ENCODE measurements at regions of chr11 and their contacts with region 1.

Region 1: DNA sequence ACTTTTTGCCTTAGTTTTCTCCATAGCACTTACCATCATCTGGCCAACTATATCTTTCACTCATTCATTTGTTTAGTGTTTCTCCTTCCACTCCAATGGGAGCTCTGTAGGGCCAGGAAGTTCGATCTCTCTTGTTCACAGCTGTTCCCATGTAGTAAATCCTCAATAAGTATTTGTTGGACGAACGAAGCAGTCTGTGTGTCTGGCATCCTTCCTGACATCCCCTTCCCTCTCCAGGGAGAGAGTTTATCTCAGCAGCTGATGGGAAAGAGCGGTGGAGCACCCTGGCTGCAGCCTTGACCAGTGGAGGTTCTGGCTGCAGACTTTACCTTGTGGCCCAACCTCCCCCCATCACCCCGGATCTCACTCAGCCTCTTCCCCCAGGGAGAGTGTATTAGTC is 141.7 kb downstream of the CHST1 start:
- DNase-seq: no peak
- ATAC-seq: no peak
- H3K4me3 ChIP-seq: no peak overlapping the region
- H3K27ac ChIP-seq: no peak overlapping the region
- H3K4me1 ChIP-seq: no peaks in the 10 kb centered on the region
- H3K27me3 ChIP-seq: peaks cover 0 to 13% (median 0%) of the 10 kb centered on the region in 7 donors
- CTCF ChIP-seq: no peak

Region 2: DNA sequence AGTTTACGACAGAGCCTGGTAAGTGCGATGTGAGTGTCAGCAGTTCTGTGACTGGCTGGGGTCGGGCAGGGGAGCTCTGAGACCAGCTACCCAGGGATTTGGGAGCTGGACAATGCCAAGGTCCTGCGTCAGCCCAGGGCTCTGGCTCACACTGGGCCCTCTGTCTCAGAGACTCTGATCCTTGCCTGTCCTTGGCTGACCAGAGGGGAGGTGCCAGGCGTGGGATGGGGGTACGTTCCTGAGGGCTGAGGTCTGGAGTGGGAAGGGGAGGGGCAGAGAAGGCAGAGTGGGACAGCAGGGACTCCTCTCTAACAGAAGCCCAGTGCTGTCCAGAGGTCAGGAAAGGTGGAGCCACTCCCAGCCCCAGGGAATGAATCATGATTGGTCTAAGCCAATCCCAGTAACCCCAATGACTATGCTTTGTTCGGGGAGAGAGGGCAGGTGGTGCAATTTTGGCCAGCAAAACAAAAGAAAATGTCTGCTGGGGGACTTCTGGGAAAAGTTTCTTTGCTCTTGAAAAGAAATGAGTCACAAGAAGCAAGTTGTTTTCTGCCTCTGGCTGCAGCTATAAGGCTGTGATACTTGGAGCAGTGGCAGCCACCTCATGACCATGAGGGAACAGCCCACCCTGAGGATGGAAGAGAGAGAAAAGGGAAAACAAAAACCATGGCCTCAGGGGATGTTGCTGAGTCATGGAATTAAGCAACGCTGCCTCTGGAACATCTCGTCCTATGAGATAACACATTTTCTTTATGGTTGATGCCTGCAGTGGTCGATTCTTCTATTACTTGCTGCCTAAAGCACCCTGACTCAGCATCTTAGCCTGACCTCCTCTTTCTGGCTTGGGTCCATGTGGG is 33.3 kb after region 1 on chr11:
- intact Hi-C with region 1: no loop called
- DNase-seq: peak in 1 of 2 donors; percentile 19
- ATAC-seq: peak in 1 of 8 donors; percentile 66
- H3K4me3 ChIP-seq: no peak overlapping the region
- H3K27ac ChIP-seq: no peak overlapping the region
- H3K4me1 ChIP-seq: peaks cover 0 to 20% (median 13%) of the 10 kb centered on the region in 9 donors
- H3K27me3 ChIP-seq: peaks cover 0 to 10% (median 0%) of the 10 kb centered on the region in 7 donors
- CTCF ChIP-seq: no peak

Region 3: GRCh38 chr11:45572354-45573123 is 48.8 kb after region 1 on chr11:
- intact Hi-C with region 1: loop called in 1 of 10 experiments (anchors 5 kb)
- DNase-seq: no peak
- ATAC-seq: no peak
- H3K4me3 ChIP-seq: no peak overlapping the region
- H3K27ac ChIP-seq: no peak overlapping the region
- H3K4me1 ChIP-seq: no peaks in the 10 kb centered on the region
- H3K27me3 ChIP-seq: peaks cover 0 to 56% (median 31%) of the 10 kb centered on the region in 7 donors
- CTCF ChIP-seq: no peak